Naive thymus-derived CD4-positive, alpha-beta T cell (primary cell): ENCODE measurements at regions of chr4 and their contacts with region 1.

Region 1: GRCh38 chr4:973431-974397 is at the start of gene DGKQ:
- DNase-seq: peak; percentile 68 to 93 (median 83)
- ATAC-seq: peak; percentile 96
- H3K4me3 ChIP-seq: peak within 1 kb of the TSS; percentile 56
- H3K4me3 Mint-ChIP-seq: peak within 1 kb of the TSS; percentile 19 to 75 (median 56)
- H3K27ac ChIP-seq: peak within 1 kb of the TSS; percentile 72
- H3K27ac Mint-ChIP-seq: no peak within 1 kb of the TSS
- H3K4me1 ChIP-seq: peaks cover 13 to 26% of the 10 kb centered on the region in 2 donors
- H3K4me1 Mint-ChIP-seq: peaks cover 0 to 17% (median 10%) of the 10 kb centered on the region in 7 donors
- H3K27me3 ChIP-seq: no peaks in the 10 kb centered on the region
- H3K27me3 Mint-ChIP-seq: no peaks in the 10 kb centered on the region
- total RNA-seq, gene DGKQ: 14.9 to 28.0 (median 22.7) TPM

Region 2: DNA sequence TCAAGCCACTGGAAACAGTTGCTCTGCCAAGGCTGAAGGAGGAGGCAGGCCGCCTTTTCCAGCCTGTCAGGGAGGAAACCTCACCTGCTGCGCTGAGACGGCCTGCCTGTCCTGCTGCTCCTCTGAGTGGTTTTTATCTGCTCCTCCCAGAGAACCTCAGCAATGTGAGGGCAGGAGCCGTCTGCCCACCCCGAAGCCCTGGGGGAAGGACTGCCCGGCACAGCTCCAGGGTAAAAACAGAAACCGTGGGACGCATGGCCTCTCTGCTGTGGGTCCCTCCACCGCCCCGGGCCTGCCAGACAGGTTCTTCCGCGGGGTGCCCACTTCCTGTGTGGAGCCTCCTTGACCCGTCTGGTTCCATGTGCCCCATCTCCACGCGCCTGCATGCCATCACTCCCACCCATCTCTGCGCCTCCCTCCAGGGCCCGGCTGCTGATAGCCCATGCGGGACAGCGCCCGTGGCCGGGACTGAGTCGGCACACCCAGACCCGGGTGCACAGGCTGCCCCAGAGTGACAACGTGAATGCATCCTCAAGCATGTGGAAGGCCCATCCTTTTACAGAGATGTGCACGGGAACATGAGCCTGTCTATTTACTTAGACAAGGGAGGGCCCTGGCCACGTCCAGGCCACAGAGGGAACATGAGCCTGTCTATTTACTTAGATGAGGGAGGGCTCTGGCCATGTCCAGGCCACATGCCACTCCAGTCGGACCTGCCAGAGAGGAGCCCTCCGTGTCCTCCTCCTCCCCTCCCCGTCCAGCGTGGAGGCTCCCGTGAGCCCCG is 280.8 kb before region 1 on chr4:
- CTCF ChIA-PET with region 1: no interaction called
- POLR2A ChIA-PET with region 1: no interaction called
- intact Hi-C with region 1: no loop called
- DNase-seq: no peak
- ATAC-seq: no peak
- H3K4me3 ChIP-seq: no peak overlapping the region
- H3K4me3 Mint-ChIP-seq: no peak overlapping the region
- H3K27ac ChIP-seq: no peak overlapping the region
- H3K27ac Mint-ChIP-seq: no peak overlapping the region
- H3K4me1 ChIP-seq: no peaks in the 10 kb centered on the region
- H3K4me1 Mint-ChIP-seq: peaks cover 0 to under 1% (median 0%) of the 10 kb centered on the region in 7 donors
- H3K27me3 ChIP-seq: no peaks in the 10 kb centered on the region
- H3K27me3 Mint-ChIP-seq: peaks cover 0 to 31% (median 5%) of the 10 kb centered on the region in 5 donors

Region 3: GRCh38 chr4:876780-877179 is 96.9 kb before region 1 on chr4:
- CTCF ChIA-PET with region 1: no interaction called
- POLR2A ChIA-PET with region 1: no interaction called
- intact Hi-C with region 1: loop called in 1 of 2 experiments (anchors 1 kb)
- DNase-seq: no peak
- ATAC-seq: no peak
- H3K4me3 ChIP-seq: no peak overlapping the region
- H3K4me3 Mint-ChIP-seq: peak overlapping the region in 1 of 10 donors; percentile 34
- H3K27ac ChIP-seq: no peak overlapping the region
- H3K27ac Mint-ChIP-seq: peak overlapping the region in 3 of 9 donors; percentile 28 to 76 (median 38)
- H3K4me1 ChIP-seq: peaks cover 15 to 21% of the 10 kb centered on the region in 2 donors
- H3K4me1 Mint-ChIP-seq: peaks cover 22 to 35% (median 28%) of the 10 kb centered on the region in 7 donors
- H3K27me3 ChIP-seq: no peaks in the 10 kb centered on the region
- H3K27me3 Mint-ChIP-seq: no peaks in the 10 kb centered on the region

Region 4: GRCh38 chr4:1011022-1011694 is 37.4 kb after region 1 on chr4 and contains the start of gene FGFRL1:
- CTCF ChIA-PET with region 1: no interaction called
- POLR2A ChIA-PET with region 1: no interaction called
- intact Hi-C with region 1: loop called (anchors 1 kb)
- DNase-seq: peak; percentile 78 to 95 (median 87)
- ATAC-seq: peak; percentile 78
- H3K4me3 ChIP-seq: peak within 1 kb of the TSS; percentile 77
- H3K4me3 Mint-ChIP-seq: peak within 1 kb of the TSS; percentile 86 to 97 (median 89)
- H3K27ac ChIP-seq: peak within 1 kb of the TSS; percentile 83
- H3K27ac Mint-ChIP-seq: peak within 1 kb of the TSS; percentile 76 to 96 (median 92)
- H3K4me1 ChIP-seq: peaks cover 0 to 10% of the 10 kb centered on the region in 2 donors
- H3K4me1 Mint-ChIP-seq: peaks cover 15 to 21% (median 18%) of the 10 kb centered on the region in 7 donors
- H3K27me3 ChIP-seq: no peaks in the 10 kb centered on the region
- H3K27me3 Mint-ChIP-seq: peaks cover 24 to 31% (median 27%) of the 10 kb centered on the region in 5 donors
- total RNA-seq, gene FGFRL1: 10.6 to 28.1 (median 22.0) TPM